Activated T-helper 1 cell treated with anti-CD3 and anti-CD28 coated beads, Interleukin-12 subunit alpha, Interleukin-12 subunit beta, Interleukin-2, Interleukin-4 antibody, amounts not matched to agents 30 ng/mL and 10 ng/mL and 1 ng/mL, durations not matched to agents 14 hours and 24 hours and 36 hours (primary cell): ENCODE measurements at regions of chr6 and their contacts with region 1.

Region 1: GRCh38 chr6:117674991-117675657 is at the start of gene NUS1:
- DNase-seq: peak; percentile 97
- H3K4me3 Mint-ChIP-seq: peak within 1 kb of the TSS; percentile 96
- H3K27ac Mint-ChIP-seq: peak within 1 kb of the TSS; percentile 87
- H3K4me1 Mint-ChIP-seq: peaks cover 49% of the 10 kb centered on the region
- H3K27me3 Mint-ChIP-seq: no peaks in the 10 kb centered on the region
- total RNA-seq, gene NUS1: 49.5 and 52.1 TPM in 2 replicates

Region 2: GRCh38 chr6:116680975-116681808 is 993.9 kb before region 1 on chr6 and contains the start of gene KPNA5:
- intact Hi-C with region 1: loop called (anchors 10 kb)
- DNase-seq: peak; percentile 84
- H3K4me3 Mint-ChIP-seq: peak within 1 kb of the TSS; percentile 97
- H3K27ac Mint-ChIP-seq: peak within 1 kb of the TSS; percentile 97
- H3K4me1 Mint-ChIP-seq: peaks cover 25% of the 10 kb centered on the region
- H3K27me3 Mint-ChIP-seq: no peaks in the 10 kb centered on the region
- total RNA-seq, gene KPNA5: 6.1 and 7.6 TPM in 2 replicates

Region 3: GRCh38 chr6:117072134-117072533 is 603.0 kb before region 1 on chr6:
- intact Hi-C with region 1: no loop called
- DNase-seq: no peak
- H3K4me3 Mint-ChIP-seq: no peak overlapping the region
- H3K27ac Mint-ChIP-seq: no peak overlapping the region
- H3K4me1 Mint-ChIP-seq: no peaks in the 10 kb centered on the region
- H3K27me3 Mint-ChIP-seq: no peaks in the 10 kb centered on the region

Region 4: DNA sequence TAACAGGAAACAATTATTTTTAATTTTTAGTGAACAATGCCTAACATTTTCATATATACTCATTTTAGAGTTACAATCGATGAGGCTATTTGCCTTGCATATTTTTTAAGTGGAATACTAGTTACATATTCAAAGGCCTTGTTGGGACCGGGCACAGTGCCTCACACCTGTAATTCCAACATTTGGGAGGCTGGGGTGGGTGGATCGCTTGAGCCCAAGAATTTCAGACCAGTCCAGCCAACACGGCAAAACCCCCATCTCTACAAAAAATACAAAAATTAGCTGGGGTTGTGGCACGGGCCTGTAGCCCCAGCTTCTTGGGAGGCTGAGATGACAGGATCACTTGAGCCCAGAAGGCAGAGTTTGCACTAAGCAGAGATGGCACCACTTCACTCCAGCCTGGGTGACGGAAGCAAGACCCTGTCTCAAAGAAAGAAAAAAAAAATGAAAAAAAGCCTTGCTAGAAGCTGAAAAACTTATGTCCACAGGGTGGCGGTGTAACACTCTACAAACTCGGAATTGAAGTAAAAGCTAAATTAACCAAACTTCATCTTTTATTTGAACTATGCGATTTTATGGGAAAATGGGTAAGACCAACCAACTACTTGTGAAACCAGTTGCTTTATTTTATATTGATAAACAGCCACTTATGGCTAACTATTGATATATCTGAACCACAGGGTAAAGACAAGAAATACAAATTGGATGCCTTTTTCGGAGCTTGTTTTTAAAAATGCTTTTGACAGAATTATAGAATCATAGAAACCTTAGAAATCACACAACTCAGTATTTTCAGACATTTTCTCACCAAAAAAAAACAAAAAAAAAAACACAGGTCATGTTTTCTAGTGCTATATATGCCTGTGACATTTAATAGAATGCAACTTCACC is 225.3 kb before region 1 on chr6:
- intact Hi-C with region 1: loop called (anchors 1 kb)
- DNase-seq: peak; percentile 31
- H3K4me3 Mint-ChIP-seq: no peak overlapping the region
- H3K27ac Mint-ChIP-seq: no peak overlapping the region
- H3K4me1 Mint-ChIP-seq: no peaks in the 10 kb centered on the region
- H3K27me3 Mint-ChIP-seq: peaks cover 40% of the 10 kb centered on the region

Region 5: DNA sequence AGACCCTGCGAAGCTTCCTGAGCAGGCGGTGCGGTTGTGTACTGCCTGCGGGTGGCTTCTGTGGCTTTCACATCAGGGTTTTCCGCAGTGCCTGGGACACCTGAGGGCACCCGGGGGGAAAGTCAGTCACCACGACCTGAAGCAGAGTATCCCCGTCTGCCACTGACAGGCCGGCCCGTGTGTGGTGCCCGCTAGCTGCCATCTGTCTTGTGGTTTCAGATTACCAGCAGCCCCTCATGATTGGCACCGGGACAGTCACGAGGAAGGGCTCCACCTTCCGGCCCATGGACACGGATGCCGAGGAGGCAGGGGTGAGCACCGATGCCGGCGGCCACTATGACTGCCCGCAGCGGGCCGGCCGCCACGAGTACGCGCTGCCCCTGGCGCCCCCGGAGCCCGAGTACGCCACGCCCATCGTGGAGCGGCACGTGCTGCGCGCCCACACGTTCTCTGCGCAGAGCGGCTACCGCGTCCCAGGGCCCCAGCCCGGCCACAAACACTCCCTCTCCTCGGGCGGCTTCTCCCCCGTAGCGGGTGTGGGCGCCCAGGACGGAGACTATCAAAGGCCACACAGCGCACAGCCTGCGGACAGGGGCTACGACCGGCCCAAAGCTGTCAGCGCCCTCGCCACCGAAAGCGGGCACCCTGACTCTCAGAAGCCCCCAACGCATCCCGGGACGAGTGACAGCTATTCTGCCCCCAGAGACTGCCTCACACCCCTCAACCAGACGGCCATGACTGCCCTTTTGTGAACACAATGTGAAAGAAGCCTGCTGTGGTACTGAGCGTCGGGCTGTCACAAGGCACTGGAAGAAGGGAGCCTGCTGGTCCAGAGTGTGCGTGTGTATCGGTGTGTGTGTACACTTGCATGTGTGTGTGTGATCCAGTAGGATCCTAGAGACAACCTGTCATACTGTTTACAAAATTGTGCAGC is 127.2 kb before region 1 on chr6:
- intact Hi-C with region 1: loop called (anchors 1 kb)
- DNase-seq: peak; percentile 26
- H3K4me3 Mint-ChIP-seq: peak overlapping the region; percentile 77
- H3K27ac Mint-ChIP-seq: peak overlapping the region; percentile 12
- H3K4me1 Mint-ChIP-seq: peaks cover 45% of the 10 kb centered on the region
- H3K27me3 Mint-ChIP-seq: peaks cover 10% of the 10 kb centered on the region

Region 6: GRCh38 chr6:117615894-117616390 is 59.2 kb before region 1 on chr6:
- intact Hi-C with region 1: no loop called
- DNase-seq: no peak
- H3K4me3 Mint-ChIP-seq: no peak overlapping the region
- H3K27ac Mint-ChIP-seq: peak overlapping the region; percentile 40
- H3K4me1 Mint-ChIP-seq: peaks cover 20% of the 10 kb centered on the region
- H3K27me3 Mint-ChIP-seq: peaks cover 3% of the 10 kb centered on the region

Region 7: DNA sequence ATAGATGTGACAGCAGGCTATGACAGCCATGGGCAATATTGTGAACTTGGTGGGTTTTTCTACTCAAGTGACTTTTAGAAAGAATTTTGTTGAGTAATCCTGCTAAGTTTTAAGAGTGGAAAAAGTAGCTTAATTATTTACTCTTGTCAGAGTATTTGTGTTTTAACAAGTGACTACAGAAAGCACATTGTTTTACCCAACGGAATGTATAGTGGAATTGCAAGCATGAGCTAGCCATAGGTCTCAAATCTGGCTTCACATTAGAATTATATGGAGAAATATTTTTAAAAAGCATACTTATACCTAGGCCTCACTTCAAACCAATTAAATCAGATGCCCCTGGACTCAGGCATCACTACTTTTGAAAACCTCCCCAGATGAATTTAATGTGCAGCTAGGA is 37.4 kb before region 1 on chr6:
- intact Hi-C with region 1: no loop called
- DNase-seq: no peak
- H3K4me3 Mint-ChIP-seq: no peak overlapping the region
- H3K27ac Mint-ChIP-seq: no peak overlapping the region
- H3K4me1 Mint-ChIP-seq: no peaks in the 10 kb centered on the region
- H3K27me3 Mint-ChIP-seq: no peaks in the 10 kb centered on the region

Region 8: DNA sequence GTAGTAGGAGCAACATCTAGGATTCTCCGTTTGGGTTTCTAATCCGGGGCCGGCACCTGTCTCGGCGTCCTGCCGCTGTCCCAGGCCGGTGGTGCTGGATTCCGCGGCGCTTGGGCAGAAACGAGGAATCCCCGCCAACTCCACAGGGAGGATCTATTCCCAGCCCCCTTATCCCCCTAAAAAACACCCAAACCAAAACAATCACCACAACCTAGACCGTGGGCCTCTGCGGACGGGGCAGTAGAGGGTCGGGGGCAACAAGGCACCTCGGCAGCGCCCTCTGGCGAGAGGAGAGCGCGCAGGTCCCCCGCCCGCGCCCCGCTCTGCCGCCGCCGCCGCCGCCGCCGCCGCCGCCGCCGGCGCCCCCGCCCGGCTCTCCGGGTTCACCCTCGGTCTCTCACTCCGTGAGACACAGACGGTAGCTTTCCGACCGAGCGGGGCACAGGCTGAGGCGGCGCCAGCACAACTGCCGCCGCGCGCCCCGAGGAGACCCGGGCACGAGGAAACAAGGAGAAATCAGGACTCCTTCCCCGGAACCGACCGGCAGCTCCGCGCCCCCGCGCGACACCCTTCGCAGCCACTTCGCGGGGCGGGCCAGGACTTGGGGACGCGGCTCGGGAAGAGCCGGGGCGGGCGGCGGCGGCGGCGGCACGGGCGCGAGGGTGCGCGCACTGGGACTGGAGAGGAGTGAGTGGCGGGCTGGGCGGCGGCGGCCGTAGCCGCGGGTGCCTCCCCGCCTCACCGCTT is 231.9 kb after region 1 on chr6 and contains the start of gene SLC35F1:
- intact Hi-C with region 1: no loop called
- DNase-seq: no peak
- H3K4me3 Mint-ChIP-seq: peak within 1 kb of the TSS; percentile 56
- H3K27ac Mint-ChIP-seq: no peak within 1 kb of the TSS
- H3K4me1 Mint-ChIP-seq: no peaks in the 10 kb centered on the region
- H3K27me3 Mint-ChIP-seq: peaks cover 44% of the 10 kb centered on the region
- total RNA-seq, gene SLC35F1: not detected in 2 replicates

Region 9: DNA sequence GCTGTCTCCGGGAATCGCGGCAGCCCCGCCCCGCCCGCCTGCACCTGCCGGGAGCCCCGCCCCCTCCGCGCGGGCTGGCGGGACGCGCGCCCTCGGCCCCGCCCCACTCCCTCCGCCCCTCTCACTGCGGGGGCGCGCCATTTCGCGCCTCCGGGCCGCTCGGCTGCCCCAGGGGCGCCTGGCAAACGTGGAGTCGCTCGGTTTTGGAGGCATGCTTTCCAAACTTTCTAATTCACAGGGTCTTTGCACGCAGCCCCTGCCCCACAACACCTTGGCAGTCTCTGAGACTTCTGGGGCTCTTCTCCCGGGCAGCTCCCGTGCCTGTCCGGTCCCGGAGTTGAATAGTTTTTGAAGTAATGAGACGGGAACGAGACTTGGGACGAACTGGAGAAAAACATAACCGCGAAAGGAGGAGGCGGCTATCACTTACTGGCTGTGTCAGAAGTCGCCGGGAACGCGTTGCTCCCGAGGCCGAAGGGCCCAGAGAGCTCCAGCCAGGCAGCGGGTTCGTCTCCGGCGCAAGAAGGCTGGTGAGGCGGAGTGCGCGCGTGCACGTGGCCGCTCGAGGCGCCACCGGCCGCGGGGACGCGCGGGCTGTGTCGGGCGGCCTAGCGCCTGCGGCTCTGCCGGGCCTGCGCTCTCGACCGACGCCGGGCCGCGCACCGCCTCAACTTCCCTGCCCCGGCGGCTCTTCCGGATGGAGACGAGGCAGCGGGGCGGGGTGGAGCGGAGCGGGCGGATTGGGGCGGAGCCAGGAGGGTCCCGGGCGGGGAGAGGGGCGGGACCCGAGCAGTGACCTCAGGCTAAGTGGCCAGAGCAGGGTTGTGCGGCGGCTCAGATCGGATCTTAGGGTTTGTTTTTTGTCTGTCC is 1259.6 kb after region 1 on chr6 and contains the start of gene MCM9:
- intact Hi-C with region 1: loop called (anchors 10 kb)
- DNase-seq: peak; percentile 86
- H3K4me3 Mint-ChIP-seq: peak within 1 kb of the TSS; percentile 91
- H3K27ac Mint-ChIP-seq: peak within 1 kb of the TSS; percentile 93
- H3K4me1 Mint-ChIP-seq: peaks cover 40% of the 10 kb centered on the region
- H3K27me3 Mint-ChIP-seq: no peaks in the 10 kb centered on the region
- total RNA-seq, gene MCM9: 19.8 and 24.4 TPM in 2 replicates